AG04449 (cell line): ENCODE measurements at regions of chr7 and their contacts with region 1.

Region 1: DNA sequence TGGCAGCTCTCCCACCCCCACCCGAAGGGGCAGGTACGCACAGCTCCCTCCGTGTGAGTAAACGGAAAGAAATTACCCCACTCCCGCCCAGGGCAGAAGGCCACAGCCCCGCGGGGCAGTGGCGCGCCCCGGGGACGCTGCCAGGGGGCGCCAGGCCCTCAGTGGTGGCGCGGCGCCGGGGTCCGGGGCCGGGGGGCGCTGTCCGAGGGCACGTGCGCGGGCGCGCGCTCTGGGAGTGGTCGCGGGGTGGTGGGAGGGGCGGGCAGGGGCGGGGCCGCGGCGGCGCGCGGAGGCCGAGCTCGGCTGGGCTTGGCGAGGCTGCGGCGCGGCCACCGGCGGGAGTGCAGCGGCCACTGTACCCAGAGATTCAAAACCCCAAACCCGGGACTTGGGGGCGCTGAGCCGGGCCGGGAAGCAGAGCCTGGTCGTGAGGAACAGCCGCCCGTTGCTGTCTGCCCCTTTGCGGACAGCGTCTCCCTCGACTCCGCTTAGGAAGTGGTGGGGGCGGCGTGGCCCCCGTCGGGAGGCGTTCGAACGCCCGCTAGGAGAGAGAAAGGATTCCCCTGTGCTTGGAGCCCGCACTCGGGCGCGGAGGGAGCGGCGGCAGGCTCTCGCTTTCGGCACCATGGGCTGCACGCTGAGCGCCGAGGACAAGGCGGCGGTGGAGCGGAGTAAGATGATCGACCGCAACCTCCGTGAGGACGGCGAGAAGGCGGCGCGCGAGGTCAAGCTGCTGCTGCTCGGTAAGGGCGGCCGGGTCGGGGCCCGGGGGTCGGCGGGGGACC is at the start of gene GNAI1:
- DNase-seq: no peak
- H3K4me3 ChIP-seq: peak within 1 kb of the TSS; percentile 68
- CTCF ChIP-seq: peak; percentile 37

Region 2: DNA sequence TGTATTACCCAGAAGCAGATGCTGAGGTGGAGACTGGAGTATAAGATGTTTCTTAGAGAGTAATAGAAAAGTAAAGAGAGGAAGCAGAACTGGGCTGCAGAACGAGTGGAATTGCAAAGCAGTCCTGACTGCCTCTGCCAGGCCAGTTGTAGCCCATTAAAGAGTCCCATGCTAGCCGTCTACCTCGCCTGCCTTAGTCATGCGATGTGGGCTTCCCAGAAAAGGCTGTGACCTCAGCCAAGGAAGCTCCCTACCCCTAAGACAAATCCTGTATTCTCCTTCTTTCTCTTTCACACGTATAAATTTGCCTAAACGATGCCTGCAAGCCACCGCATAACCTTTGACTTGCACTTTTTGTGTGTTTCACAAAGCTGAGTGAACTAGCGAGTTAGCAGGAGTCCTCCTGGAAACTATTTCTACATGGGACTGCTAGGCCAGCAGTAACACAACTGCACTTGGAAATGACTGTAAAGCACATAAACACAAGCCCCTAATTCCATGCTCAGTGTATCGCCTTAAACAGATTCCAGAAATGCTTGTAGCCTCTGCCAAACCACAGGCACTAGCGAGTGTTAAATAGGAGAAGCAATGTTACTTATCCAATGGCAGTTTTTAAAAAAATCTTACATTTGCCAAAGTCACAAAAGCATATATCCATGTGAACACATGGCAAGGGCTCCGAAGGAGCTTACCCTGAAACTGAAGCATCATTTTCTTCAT is 47.5 kb before region 1 on chr7:
- CTCF ChIA-PET with region 1: interaction called, 14 read pairs
- POLR2A ChIA-PET with region 1: interaction called, 3 read pairs
- DNase-seq: peak; percentile 63
- H3K4me3 ChIP-seq: no peak overlapping the region
- CTCF ChIP-seq: no peak

Region 3: GRCh38 chr7:80145780-80146422 is 11.2 kb after region 1 on chr7:
- CTCF ChIA-PET with region 1: interaction called, 19 read pairs
- POLR2A ChIA-PET with region 1: interaction called, 3 read pairs
- DNase-seq: peak; percentile 96
- H3K4me3 ChIP-seq: peak overlapping the region; percentile 9; the same call in 1 of the 2 replicates
- CTCF ChIP-seq: no peak